Activated T-helper 2 cell treated with anti-CD3 and anti-CD28 coated beads, Interferon-gamma antibody, Interleukin-2, Interleukin-4, amounts not matched to agents 10 μg/mL and 5 μg/mL and 100 μg/mL, durations not matched to agents 14 hours and 24 hours and 36 hours (primary cell): ENCODE measurements at regions of chr3 and their contacts with region 1.

Region 1: GRCh38 chr3:4978204-4978965 is 852 bp upstream of the BHLHE40 start:
- DNase-seq: peak; percentile 84
- H3K4me3 Mint-ChIP-seq: peak overlapping the region; percentile 87
- H3K27ac Mint-ChIP-seq: peak overlapping the region; percentile 100
- H3K4me1 Mint-ChIP-seq: peaks cover 34% of the 10 kb centered on the region
- H3K27me3 Mint-ChIP-seq: no peaks in the 10 kb centered on the region

Region 2: GRCh38 chr3:4350789-4351163 is 627.6 kb before region 1 on chr3:
- intact Hi-C with region 1: loop called (anchors 2 kb)
- DNase-seq: peak; percentile 27
- H3K4me3 Mint-ChIP-seq: peak overlapping the region; percentile 43
- H3K27ac Mint-ChIP-seq: peak overlapping the region; percentile 74
- H3K4me1 Mint-ChIP-seq: peaks cover 23% of the 10 kb centered on the region
- H3K27me3 Mint-ChIP-seq: peaks cover 9% of the 10 kb centered on the region

Region 3: GRCh38 chr3:4741404-4742307 is 236.7 kb before region 1 on chr3:
- intact Hi-C with region 1: loop called (anchors 1 kb)
- DNase-seq: no peak
- H3K4me3 Mint-ChIP-seq: no peak overlapping the region
- H3K27ac Mint-ChIP-seq: peak overlapping the region; percentile 87
- H3K4me1 Mint-ChIP-seq: peaks cover 67% of the 10 kb centered on the region
- H3K27me3 Mint-ChIP-seq: no peaks in the 10 kb centered on the region

Region 4: DNA sequence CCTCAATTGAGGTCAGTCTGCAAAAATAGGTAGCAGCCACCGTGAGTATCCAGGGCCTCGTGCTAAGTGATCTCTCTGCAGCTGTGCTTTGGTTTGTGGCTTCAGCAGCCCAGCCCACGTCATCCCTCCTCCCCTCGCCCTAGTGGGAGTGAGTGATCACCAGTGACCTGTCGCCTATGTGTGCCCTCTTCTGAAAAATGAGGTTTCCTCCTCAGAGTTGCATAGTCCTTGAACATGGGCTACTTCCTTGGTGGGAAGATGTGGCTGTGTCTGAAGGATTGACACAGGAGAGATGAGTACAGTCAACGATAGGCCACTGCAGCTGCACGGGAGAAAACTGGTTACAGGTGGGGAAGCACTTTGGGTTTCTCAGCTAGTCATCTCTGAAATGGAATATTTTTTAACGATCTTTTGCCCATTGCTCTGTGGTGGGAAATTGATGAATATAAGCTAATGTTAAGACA is 143.9 kb before region 1 on chr3:
- intact Hi-C with region 1: loop called (anchors 1 kb)
- DNase-seq: peak; percentile 74
- H3K4me3 Mint-ChIP-seq: peak overlapping the region; percentile 74
- H3K27ac Mint-ChIP-seq: peak overlapping the region; percentile 96
- H3K4me1 Mint-ChIP-seq: peaks cover 80% of the 10 kb centered on the region
- H3K27me3 Mint-ChIP-seq: no peaks in the 10 kb centered on the region

Region 5: DNA sequence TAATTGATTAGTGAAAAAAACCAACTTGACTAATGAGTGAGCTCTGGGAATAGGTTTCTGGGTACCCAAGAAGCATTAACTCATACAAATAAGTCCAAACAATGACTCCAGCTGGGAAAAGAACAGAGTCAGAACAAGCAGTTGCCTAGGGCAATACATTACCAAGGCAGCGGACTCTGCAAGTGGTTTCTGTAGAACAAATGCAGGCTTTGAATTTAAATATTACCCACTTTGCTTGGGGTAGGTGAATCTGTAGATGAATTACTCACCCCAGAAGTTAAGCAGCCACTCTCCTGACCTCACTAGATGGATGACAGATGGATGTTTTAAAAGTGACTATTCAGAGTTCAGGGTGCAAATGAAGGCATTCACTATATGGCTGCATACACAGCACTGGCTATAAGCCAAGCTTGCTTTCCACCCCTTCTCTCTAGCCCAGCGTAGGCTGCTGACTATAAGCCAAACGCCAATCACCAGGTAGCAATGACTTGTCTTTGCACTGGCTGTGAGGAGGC is 72.2 kb before region 1 on chr3:
- intact Hi-C with region 1: loop called (anchors 1 kb)
- DNase-seq: no peak
- H3K4me3 Mint-ChIP-seq: peak overlapping the region; percentile 57
- H3K27ac Mint-ChIP-seq: peak overlapping the region; percentile 91
- H3K4me1 Mint-ChIP-seq: peaks cover 93% of the 10 kb centered on the region
- H3K27me3 Mint-ChIP-seq: no peaks in the 10 kb centered on the region

Region 6: DNA sequence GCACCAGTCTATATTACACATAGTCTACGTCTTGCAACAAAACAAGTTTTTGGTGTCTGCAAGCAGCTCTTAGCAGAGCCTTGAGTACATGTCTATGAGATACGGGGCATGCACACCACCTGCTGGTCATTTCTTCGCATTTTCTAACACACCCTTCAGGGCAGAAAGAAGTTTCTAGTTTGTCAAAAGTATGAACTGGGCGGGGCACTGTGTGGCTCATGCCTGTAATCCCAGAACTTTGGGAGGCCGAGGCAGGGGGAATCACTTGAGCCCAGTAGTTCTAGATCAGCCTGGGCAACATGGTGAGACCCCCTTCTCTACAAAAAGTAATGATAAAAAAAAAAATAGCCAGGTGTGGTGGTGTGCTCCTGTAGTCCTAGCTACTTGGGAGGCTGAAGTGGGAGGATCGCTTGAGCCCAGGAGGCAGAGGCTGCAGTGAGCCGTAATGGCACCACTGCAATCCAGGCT is 79.5 kb after region 1 on chr3:
- intact Hi-C with region 1: loop called (anchors 2 kb)
- DNase-seq: peak; percentile 65
- H3K4me3 Mint-ChIP-seq: no peak overlapping the region
- H3K27ac Mint-ChIP-seq: peak overlapping the region; percentile 3
- H3K4me1 Mint-ChIP-seq: peaks cover 30% of the 10 kb centered on the region
- H3K27me3 Mint-ChIP-seq: peaks cover 8% of the 10 kb centered on the region